PC-9 (cell line): ENCODE measurements at regions of chr10 and their contacts with region 1.

Region 1: DNA sequence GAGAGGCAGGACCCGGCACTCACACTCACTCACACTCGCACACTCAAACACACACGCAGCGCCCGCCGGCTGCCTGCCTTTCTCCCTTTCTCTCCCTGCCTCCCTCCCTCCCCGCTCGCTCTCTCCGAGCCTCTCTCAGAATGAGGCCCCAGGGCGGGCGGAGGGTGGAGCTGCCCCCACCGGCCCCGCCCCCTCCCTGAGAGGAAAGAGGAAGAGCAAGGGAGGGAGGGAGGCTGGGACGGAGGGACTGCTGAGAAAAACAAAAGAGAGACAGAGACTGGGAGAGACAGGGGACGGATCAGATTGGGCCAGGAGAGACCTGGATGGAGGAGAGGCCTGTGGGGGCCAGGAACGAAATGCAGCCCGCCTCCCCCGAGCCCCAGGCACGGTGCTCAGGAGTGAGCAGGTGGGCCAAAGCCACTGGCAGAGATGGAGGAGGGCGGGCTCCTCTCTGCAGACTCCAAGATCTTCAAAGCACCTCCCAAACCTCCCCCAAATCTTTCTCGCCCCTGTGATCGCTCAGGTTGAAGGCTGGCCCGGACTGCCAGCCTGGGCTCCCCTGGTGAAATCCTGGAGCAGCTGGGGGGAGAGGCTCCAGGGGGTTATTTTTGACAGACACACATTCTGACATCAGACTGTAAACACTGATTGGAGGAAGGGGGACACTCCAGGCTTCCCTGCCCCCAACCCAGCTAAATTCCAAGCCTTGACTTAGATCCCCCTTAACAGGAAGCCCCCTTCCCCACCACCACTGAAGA is 5.1 kb downstream of the LDB1 start:
- DNase-seq: peak; percentile 39 to 66
- H3K4me3 ChIP-seq: peak overlapping the region; percentile 66; the same call in 1 of the 2 replicates
- H3K27ac ChIP-seq: no peak overlapping the region
- H3K4me1 ChIP-seq: no peaks in the 10 kb centered on the region; the same call in none of the 2 replicates
- H3K27me3 ChIP-seq: no peaks in the 10 kb centered on the region
- CTCF ChIP-seq: no peak

Region 2: GRCh38 chr10:101529725-101530553 is 585.1 kb before region 1 on chr10:
- CTCF ChIA-PET with region 1: no interaction called
- POLR2A ChIA-PET with region 1: no interaction called
- intact Hi-C with region 1: no loop called
- DNase-seq: no peak
- H3K4me3 ChIP-seq: no peak overlapping the region
- H3K27ac ChIP-seq: no peak overlapping the region
- H3K4me1 ChIP-seq: no peaks in the 10 kb centered on the region
- H3K27me3 ChIP-seq: no peaks in the 10 kb centered on the region
- CTCF ChIP-seq: no peak

Region 3: DNA sequence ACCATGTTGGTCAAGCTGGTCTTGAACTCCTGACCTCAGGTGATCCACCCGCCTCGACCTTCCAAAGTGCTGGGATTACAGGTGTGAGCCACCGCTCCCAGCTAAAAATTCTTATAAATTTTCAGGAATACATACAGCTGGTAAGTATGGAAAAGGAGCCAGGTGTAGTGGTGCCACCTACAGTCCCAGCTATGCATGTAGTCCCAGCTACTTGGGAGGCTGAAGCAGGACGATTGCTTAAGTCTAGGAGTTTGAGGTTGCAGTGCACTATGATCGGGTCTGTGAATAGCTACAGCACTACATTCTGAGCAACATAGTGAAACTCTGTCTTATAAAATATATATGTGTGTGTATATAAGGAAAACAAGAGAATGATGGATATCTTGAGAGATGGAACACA is 13.9 kb before region 1 on chr10:
- CTCF ChIA-PET with region 1: interaction called, 10 read pairs
- POLR2A ChIA-PET with region 1: no interaction called
- intact Hi-C with region 1: no loop called
- DNase-seq: no peak
- H3K4me3 ChIP-seq: no peak overlapping the region
- H3K27ac ChIP-seq: no peak overlapping the region
- H3K4me1 ChIP-seq: no peaks in the 10 kb centered on the region
- H3K27me3 ChIP-seq: no peaks in the 10 kb centered on the region
- CTCF ChIP-seq: peak; percentile 43; the same call in 1 of the 2 replicates

Region 4: DNA sequence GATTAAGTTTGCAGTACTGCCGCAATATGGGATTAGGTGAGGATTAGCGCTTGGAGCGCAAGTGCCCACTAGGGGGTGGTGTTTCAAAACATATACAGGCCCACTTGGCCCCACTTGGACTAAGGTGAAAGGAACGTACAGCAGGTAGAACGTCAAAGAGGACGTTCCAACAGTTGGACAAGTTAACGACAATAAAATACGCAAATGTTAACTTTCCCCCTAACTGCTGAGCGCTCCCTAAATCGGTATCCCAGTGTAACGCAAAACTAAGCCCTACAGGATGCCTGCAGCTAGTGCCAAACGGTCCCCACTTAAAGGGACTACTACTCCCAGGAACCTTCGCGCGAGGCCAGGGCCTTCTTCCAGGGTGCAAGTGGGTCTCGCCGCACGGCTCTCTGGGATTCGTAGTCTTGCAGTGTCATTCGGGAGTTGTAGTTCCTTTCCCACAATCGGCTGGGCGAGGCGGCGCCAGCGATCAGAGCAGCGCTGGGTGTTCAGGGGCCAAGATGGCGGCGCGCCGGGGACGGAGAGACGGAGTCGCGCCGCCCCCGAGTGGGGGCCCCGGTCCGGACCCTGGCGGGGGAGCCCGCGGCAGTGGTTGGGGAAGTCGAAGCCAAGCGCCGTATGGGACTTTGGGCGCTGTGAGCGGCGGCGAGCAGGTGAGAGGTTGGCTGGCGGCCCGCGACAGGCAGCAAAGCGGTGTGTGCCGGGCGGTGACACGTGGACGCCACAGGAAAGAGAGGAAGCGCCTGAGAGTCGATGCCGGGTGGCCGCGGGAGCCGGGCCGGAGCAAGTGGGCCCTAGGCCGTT is 17.7 kb after region 1 on chr10 and contains the start of gene PPRC1:
- CTCF ChIA-PET with region 1: interaction called, 3 read pairs
- POLR2A ChIA-PET with region 1: interaction called, 11 read pairs
- intact Hi-C with region 1: loop called (anchors 2 kb)
- DNase-seq: peak; percentile 91 to 92
- H3K4me3 ChIP-seq: peak within 1 kb of the TSS; percentile 87
- H3K27ac ChIP-seq: peak within 1 kb of the TSS; percentile 89
- H3K4me1 ChIP-seq: peaks cover 26% of the 10 kb centered on the region
- H3K27me3 ChIP-seq: no peaks in the 10 kb centered on the region
- CTCF ChIP-seq: peak; percentile 83
- total RNA-seq, gene PPRC1: 22.9 and 25.1 TPM in 2 replicates